GM10248 (cell line): ENCODE measurements at regions of chr6 and their contacts with region 1.

Region 1: DNA sequence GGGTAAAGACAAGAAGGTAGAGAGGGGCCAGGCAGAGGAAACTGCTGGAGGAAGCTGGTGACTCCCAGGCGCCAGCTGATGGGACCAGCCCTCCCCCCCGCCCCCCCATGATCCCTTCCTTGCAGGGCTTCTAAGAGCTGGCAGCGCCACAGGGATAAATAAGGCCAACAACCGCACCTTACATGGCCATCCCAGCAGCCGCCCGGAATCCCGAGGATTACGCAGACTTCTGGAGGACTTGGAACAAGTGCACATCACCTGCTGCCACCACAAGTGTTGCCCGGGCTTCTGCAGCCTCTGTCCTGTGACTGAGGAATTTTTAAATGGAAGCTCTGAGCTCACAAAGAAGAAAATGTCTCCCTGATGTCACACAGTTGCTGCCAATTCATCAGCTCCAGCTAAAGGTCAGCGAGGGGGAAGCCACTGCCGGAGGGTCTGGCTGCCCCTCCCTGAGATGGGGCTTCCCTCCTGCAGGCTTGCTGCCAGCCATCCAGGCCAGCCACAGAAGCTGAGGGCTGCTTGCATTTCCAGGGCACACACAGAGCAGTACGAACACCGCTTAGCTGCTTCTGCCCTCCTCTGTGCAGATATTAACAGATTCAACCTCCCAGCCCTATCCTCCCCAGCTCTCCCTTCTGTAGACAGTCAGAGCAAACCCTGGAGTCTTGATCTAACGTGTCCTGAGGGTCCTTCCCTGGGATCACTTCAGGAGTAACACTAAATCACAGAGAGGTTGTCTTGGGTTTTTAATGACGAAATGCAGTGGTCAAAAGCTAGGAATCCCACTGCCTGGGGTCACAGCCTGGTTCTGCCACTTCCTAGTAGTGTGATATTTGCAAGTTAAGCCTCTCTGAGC is 38.6 kb upstream of the PIM1 start:
- DNase-seq: no peak
- CTCF ChIP-seq: no peak

Region 2: DNA sequence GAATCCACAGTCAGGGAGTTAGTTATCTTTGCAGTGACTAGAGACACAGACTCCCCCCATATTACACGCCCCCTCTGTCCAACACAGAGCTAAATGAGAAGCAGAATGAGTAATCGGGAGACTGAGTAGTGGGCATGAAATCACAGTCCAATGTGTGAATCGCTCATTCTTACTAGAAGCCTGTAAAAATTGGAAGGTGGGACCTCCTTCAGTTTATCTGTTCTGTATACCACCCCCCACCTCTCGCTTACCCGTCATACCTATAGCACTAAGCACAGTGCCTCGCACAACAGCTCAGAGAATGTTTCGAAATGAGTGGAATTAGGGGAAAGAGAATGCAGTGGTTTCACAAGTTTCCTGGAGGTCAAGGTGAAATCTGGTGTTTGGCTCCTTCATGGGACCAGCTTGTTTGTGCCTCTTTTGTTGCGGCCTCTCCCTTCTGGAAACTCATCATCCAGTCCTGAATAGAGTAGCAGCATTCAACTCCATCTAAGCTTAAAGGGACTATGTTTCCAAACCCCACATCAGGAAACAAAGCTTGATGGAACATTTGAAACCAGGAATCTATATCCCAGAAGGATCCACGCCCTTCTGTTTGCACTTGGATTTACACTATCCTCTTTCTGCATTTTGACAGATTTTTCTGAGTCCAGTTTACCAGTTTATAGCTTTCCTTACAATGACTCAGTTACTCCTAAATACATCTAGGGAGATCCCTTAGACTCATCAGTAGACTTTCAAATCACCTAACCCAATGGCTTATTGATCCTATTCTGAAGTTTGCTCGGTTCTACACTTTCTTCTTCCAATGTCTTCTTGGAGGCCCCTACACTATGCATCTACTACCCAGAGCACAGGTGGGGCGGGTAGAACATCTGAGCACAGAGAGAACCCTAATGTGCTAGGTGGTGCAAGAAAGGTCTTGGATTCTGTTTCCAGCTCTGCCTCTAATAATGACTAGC is 20.6 kb before region 1 on chr6:
- CTCF ChIA-PET with region 1: interaction called, 13 read pairs
- POLR2A ChIA-PET with region 1: no interaction called
- DNase-seq: peak; percentile 54
- CTCF ChIP-seq: no peak

Region 3: GRCh38 chr6:37141281-37142049 is 10.1 kb after region 1 on chr6:
- CTCF ChIA-PET with region 1: interaction called, 14 read pairs
- POLR2A ChIA-PET with region 1: interaction called, 3 read pairs
- DNase-seq: no peak
- CTCF ChIP-seq: no peak